H1 (cell line): ENCODE measurements at regions of chr17 and their contacts with region 1.

Region 1: GRCh38 chr17:5391678-5392077 is 27.8 kb downstream of the NUP88 start:
- DNase-seq: no peak
- H3K4me3 ChIP-seq: no peak overlapping the region
- H3K27ac ChIP-seq: no peak overlapping the region
- H3K4me1 ChIP-seq: no peaks in the 10 kb centered on the region
- H3K27me3 ChIP-seq: peaks cover 0 to 2% (median 0%) of the 10 kb centered on the region in 4 experiments; a peak in 1 of 7 replicates
- CTCF ChIP-seq: no peak
- EP300 ChIP-seq: no peak
- POLR2A ChIP-seq: no peak
- RAD21 ChIP-seq: no peak

Region 2: GRCh38 chr17:5381542-5381941 is 10.1 kb before region 1 on chr17:
- CTCF ChIA-PET with region 1: interaction called, 5 read pairs
- POLR2A ChIA-PET with region 1: interaction called, 18 read pairs
- DNase-seq: no peak
- H3K4me3 ChIP-seq: no peak overlapping the region
- H3K27ac ChIP-seq: no peak overlapping the region
- H3K4me1 ChIP-seq: no peaks in the 10 kb centered on the region
- H3K27me3 ChIP-seq: no peaks in the 10 kb centered on the region
- CTCF ChIP-seq: no peak
- EP300 ChIP-seq: no peak
- POLR2A ChIP-seq: no peak
- RAD21 ChIP-seq: no peak